Posterior cingulate gyrus (tissue), 11 donors: ENCODE measurements at regions of chr2 and their contacts with region 1.

Region 1: DNA sequence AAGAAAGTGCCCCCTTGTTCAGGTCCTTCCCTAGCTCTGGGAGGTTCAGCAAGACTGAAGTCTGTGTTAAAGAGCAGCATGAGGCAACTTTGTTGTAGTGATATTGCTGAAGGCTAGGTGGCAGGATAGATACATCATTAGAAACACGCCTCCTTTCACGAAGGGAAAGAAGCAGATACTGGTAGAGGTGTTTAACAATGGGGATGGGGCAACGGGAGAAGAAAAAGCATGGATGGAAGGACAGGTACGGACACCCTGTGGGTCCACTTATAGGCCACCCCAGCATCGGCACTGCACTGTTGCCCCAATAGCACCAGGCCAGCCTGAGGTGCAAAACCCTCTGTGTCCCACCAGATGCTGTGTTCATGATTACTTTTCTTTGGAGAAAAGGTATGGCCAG is 3.5 kb upstream of the IGFBP5 start:
- DNase-seq: no peak

Region 2: GRCh38 chr2:217064234-217065024 is 365.5 kb after region 1 on chr2:
- intact Hi-C with region 1: loop called (anchors 10 kb)
- DNase-seq: no peak

Region 3: DNA sequence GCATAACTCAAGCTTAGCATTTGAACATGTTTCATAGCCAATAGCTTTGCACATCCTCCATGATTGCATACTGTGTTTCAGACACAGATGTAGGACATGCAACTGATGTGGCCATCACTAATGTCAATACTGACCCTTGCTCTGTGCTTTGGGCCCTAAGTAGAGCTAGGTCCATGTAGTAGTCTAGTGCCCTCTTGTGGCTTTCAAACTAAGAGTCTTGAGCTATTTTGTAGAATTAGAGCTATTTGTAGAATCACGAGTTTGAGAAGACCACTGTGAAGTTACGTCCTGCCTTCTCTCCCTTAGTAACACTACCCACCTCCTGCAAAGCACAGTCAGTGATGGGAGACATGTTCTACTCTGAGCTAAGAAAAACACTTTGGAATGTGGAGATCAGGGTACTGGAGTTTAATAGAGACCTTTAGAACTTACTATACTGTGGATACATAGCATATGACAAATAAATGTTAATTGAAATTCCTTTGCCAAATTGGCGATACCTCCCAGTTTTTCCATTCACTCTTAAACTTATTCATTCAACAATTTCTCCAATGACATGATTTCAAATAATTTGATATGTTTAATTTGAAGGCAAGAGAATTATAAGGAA is 467.5 kb after region 1 on chr2:
- intact Hi-C with region 1: loop called (anchors 1 kb)
- DNase-seq: no peak